Activated CD4-positive, alpha-beta memory T cell treated with anti-CD3 and anti-CD28 coated beads, Interleukin-2, amount 10 ng/mL, durations not matched to agents 7 days and 5 days (primary cell): ENCODE measurements at regions of chr7 and their contacts with region 1.

Region 1: DNA sequence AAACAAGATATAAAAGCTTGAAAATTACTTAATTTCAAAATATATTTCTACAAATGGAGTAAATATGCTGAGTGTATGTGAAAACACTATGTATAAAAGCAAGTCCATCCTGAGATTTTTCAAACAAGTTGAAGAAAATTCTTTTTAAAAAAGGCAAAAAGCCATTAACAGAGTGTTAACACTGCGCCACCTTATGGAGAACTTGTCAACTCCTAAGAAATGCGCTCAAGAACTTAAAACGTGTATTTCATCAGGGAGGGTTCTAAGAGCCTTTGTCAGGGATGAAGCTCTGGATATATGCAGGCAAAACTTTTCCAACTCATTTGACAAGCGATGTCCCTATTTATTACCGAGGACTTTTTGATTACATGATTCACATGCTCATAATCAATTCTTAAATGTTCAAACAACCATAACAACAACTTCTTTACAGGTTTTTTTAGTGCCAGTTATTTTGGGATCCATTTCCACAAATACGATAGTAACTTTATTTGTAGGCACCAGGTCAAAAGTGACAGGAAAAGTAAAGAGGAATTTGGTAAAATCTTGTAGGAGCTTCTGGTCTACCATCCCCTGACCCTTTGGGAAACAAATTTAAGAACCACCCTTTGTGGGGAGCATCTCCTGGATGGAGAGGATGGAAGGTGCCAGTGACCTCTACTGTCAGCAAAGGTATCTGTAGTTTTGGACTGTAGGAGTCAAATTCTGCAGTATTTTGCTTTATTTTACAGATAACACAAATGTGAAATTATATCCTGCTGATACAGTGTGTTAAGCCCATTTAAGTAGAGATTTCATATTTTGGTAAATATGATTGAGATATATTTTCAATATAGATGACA is 23.2 kb downstream of the CALCR start:
- DNase-seq: no peak
- H3K4me3 Mint-ChIP-seq: no peak overlapping the region
- H3K27ac Mint-ChIP-seq: no peak overlapping the region
- H3K4me1 Mint-ChIP-seq: no peaks in the 10 kb centered on the region
- H3K27me3 Mint-ChIP-seq: peaks cover 7% of the 10 kb centered on the region

Region 2: DNA sequence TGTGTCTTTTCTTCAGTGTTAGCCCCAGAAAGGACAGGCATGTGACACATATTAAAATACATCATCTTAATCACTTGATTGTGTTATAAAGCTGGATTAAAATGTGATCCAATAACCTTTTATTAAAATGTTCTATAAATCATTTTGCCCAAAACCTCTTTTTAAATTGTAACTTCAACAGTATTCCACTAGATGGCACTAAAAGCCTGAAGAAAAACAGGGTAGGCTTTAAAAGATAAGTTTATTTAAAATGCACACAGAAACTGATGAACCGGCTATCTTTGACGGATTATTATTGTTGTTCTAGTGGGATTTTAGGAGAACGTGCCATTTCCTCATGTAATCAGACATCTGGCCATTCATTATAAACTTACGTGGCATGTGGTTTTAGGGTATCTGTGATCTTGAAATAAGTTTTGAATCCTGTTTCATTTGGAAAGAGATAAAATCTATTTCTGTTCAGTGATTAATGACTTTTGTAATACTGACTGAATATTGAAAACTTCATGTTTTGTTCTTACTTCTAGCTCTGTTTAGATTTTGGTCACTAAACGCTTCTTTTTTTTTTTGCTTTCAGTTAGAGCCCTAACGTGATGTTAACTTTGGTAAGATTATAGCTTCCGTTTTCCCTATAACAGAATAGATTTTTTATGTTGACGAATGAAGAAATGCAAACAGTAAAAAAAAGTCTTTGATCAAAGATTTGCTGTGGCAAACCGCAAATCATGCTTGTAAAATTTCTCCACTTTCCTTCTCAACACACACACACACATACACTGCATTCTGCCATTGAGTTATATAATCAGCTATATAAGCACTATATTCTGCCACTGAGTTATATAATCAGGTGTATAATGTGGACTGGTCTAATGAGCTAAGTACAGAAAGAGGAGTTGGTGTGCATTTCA is 305.5 kb before region 1 on chr7:
- CTCF ChIA-PET with region 1: interaction called, 25 read pairs
- POLR2A ChIA-PET with region 1: no interaction called
- DNase-seq: no peak
- H3K4me3 Mint-ChIP-seq: no peak overlapping the region
- H3K27ac Mint-ChIP-seq: no peak overlapping the region
- H3K4me1 Mint-ChIP-seq: peaks cover 8% of the 10 kb centered on the region
- H3K27me3 Mint-ChIP-seq: no peaks in the 10 kb centered on the region

Region 3: DNA sequence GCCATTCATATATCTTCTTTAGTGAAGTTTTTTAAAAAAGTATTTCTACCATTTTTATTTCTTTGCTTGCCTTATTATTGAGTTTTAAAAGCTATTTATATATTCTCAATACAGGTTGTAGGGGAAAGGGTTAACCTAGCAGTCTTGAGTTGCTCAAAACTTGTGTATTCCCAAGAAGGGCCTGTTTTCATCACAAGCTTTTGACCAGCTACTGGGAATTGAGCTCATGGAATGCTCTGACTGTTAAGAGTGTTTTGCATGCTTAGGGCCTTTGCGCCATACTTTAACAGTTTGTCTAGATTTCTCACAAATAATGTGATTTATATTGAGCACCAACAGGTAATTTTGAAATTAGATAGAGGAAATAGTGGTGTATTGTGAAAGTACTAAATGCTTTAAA is 95.3 kb after region 1 on chr7:
- CTCF ChIA-PET with region 1: no interaction called
- POLR2A ChIA-PET with region 1: no interaction called
- DNase-seq: no peak
- H3K4me3 Mint-ChIP-seq: no peak overlapping the region
- H3K27ac Mint-ChIP-seq: no peak overlapping the region
- H3K4me1 Mint-ChIP-seq: no peaks in the 10 kb centered on the region
- H3K27me3 Mint-ChIP-seq: no peaks in the 10 kb centered on the region